Vagina (tissue), 2 donors: ENCODE measurements at regions of chr6 and their contacts with region 1.

Region 1: GRCh38 chr6:16206595-16207037 is 31.8 kb upstream of the GMPR start:
- DNase-seq: peak in 1 of 2 donors; percentile 70
- H3K4me3 ChIP-seq: no peak overlapping the region
- H3K27ac ChIP-seq: no peak overlapping the region
- H3K4me1 ChIP-seq: no peaks in the 10 kb centered on the region
- H3K27me3 ChIP-seq: no peaks in the 10 kb centered on the region
- CTCF ChIP-seq: peak; percentile 73 to 96 (median 93)
- POLR2A ChIP-seq: no peak

Region 2: GRCh38 chr6:15691250-15691869 is 515.3 kb before region 1 on chr6:
- intact Hi-C with region 1: loop called (anchors 5 kb)
- DNase-seq: peak in 1 of 2 donors; percentile 90
- H3K4me3 ChIP-seq: peak overlapping the region; percentile 34 to 37
- H3K27ac ChIP-seq: peak overlapping the region; percentile 35
- H3K4me1 ChIP-seq: peaks cover 11% of the 10 kb centered on the region
- H3K27me3 ChIP-seq: no peaks in the 10 kb centered on the region
- CTCF ChIP-seq: peak; percentile 99 to 100 (median 99)
- POLR2A ChIP-seq: no peak